Activated naive CD4-positive, alpha-beta T cell treated with anti-CD3 and anti-CD28 coated beads for 36 hours (primary cell): ENCODE measurements at regions of chr6 and their contacts with region 1.

Region 1: GRCh38 chr6:149431905-149432775 is 32.1 kb downstream of the SUMO4 start:
- DNase-seq: peak; percentile 97
- H3K4me3 Mint-ChIP-seq: no peak overlapping the region
- H3K27ac Mint-ChIP-seq: no peak overlapping the region
- H3K4me1 Mint-ChIP-seq: peaks cover 2% of the 10 kb centered on the region
- H3K27me3 Mint-ChIP-seq: no peaks in the 10 kb centered on the region

Region 2: GRCh38 chr6:148578245-148578732 is 853.9 kb before region 1 on chr6:
- CTCF ChIA-PET with region 1: no interaction called
- intact Hi-C with region 1: loop called (anchors 5 kb)
- DNase-seq: peak; percentile 68
- H3K4me3 Mint-ChIP-seq: no peak overlapping the region
- H3K27ac Mint-ChIP-seq: no peak overlapping the region
- H3K4me1 Mint-ChIP-seq: no peaks in the 10 kb centered on the region
- H3K27me3 Mint-ChIP-seq: peaks cover 24% of the 10 kb centered on the region

Region 3: GRCh38 chr6:149043476-149044130 is 388.5 kb before region 1 on chr6:
- CTCF ChIA-PET with region 1: interaction called, 15 read pairs
- intact Hi-C with region 1: no loop called
- DNase-seq: peak; percentile 53
- H3K4me3 Mint-ChIP-seq: no peak overlapping the region
- H3K27ac Mint-ChIP-seq: no peak overlapping the region
- H3K4me1 Mint-ChIP-seq: peaks cover 33% of the 10 kb centered on the region
- H3K27me3 Mint-ChIP-seq: no peaks in the 10 kb centered on the region

Region 4: GRCh38 chr6:149190224-149190831 is 241.8 kb before region 1 on chr6:
- CTCF ChIA-PET with region 1: interaction called, 13 read pairs
- intact Hi-C with region 1: loop called (anchors 1 kb)
- DNase-seq: peak; percentile 87
- H3K4me3 Mint-ChIP-seq: no peak overlapping the region
- H3K27ac Mint-ChIP-seq: no peak overlapping the region
- H3K4me1 Mint-ChIP-seq: peaks cover 19% of the 10 kb centered on the region
- H3K27me3 Mint-ChIP-seq: no peaks in the 10 kb centered on the region

Region 5: DNA sequence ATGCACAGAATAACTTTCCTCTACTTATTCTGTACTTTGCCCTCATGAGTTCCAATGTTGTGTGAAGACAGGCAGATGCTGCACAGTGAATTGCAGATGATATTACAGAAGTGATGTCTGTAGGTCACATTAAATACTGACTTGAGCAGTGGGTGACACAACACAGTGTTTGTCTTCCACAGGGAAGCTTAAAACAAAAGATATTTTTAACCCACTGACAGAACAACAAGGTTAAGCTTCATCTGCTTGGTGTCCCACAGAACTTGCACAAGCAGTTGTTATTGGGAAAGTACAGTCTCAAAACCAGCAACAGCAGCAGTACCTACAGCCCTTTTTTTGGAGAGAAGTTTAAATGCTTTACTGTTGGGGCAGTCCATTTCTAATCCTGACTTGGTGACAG is 21.6 kb before region 1 on chr6:
- CTCF ChIA-PET with region 1: interaction called, 10 read pairs
- intact Hi-C with region 1: no loop called
- DNase-seq: no peak
- H3K4me3 Mint-ChIP-seq: no peak overlapping the region
- H3K27ac Mint-ChIP-seq: no peak overlapping the region
- H3K4me1 Mint-ChIP-seq: peaks cover 19% of the 10 kb centered on the region
- H3K27me3 Mint-ChIP-seq: no peaks in the 10 kb centered on the region

Region 6: DNA sequence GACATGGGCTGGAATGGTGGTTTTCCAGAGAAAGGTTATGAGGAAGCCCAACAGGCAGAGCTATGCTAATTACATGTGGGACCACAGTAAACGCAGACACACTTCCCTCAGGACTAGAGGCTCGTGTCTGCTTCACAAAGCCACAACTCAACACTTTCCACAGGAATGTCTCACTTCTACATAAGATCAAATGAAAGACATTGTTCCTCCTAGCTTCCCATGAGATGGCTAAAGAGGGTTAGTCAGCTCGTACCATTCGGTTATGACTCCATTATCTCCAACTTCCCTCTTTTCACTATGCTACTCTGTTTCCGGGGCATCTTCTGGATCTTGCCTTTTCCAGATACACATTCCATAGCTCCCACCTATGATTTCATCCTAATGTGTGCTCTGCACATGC is 81.8 kb after region 1 on chr6:
- CTCF ChIA-PET with region 1: interaction called, 58 read pairs
- intact Hi-C with region 1: loop called (anchors 1 kb)
- DNase-seq: no peak
- H3K4me3 Mint-ChIP-seq: no peak overlapping the region
- H3K27ac Mint-ChIP-seq: peak overlapping the region; percentile 4
- H3K4me1 Mint-ChIP-seq: peaks cover 50% of the 10 kb centered on the region
- H3K27me3 Mint-ChIP-seq: no peaks in the 10 kb centered on the region

Region 7: DNA sequence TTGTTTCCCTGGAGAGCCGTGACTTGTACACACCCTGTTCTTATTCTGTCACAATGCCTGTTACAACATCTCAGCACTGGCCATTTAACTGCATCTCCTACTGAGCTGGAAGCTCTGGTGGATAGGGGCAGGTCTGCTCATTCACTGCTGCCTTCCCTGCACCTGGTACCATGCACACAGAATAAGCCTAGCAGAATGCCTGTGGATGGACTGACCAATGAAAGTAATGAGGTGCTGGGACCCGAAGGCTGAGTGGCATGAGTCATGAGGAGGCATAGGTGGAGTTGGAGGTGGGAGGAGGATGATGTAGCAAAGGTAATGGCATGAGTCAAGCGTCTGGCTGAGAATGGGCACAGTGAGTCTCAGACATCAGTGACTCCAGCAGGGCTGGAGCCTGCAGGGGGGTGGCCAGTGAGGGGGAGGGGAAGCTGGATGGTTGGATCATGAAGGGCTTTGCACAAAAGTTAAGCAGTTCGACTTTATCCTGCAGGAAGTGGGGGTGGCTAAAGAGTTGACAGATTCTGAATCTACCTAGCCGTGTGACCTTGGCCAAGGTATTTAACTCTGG is 837.6 kb after region 1 on chr6:
- CTCF ChIA-PET with region 1: no interaction called
- intact Hi-C with region 1: no loop called
- DNase-seq: no peak
- H3K4me3 Mint-ChIP-seq: no peak overlapping the region
- H3K27ac Mint-ChIP-seq: no peak overlapping the region
- H3K4me1 Mint-ChIP-seq: no peaks in the 10 kb centered on the region
- H3K27me3 Mint-ChIP-seq: no peaks in the 10 kb centered on the region